Cardiac septum (tissue), 1 donor: ENCODE measurements at regions of chr1 and their contacts with region 1.

Region 1: DNA sequence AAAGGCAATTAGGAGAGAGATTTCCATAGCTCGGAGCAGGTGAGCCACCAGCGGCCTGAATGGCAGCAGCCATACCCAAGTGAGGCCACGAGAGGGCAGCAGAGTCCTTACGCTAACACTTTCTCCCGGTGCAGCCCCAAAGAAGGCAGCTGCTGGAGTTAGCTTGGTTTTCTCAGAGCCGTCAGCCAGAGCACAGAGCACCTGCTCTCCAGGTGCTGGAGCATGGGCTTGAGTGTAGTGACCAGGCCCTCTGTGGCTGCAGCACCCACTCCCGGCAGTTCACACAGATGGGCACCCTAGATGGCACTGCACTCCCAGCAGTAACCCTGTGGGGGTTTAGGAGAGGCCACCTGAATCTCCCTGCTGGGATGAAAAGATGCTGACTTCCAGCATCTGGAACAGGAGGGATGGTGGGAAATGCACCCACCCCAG is 45.8 kb downstream of the TMCC2 start:
- DNase-seq: peak; percentile 91

Region 2: GRCh38 chr1:205324781-205325180 is 51.2 kb after region 1 on chr1:
- intact Hi-C with region 1: loop called (anchors 1 kb)
- DNase-seq: no peak